AG04449 (cell line): ENCODE measurements at regions of chr3 and their contacts with region 1.

Region 1: GRCh38 chr3:195117978-195118581 is 152.9 kb downstream of the XXYLT1 start:
- DNase-seq: no peak
- H3K4me3 ChIP-seq: no peak overlapping the region
- CTCF ChIP-seq: no peak

Region 2: GRCh38 chr3:195048059-195048905 is 69.8 kb before region 1 on chr3:
- CTCF ChIA-PET with region 1: no interaction called
- POLR2A ChIA-PET with region 1: no interaction called
- DNase-seq: no peak
- H3K4me3 ChIP-seq: no peak overlapping the region
- CTCF ChIP-seq: no peak

Region 3: GRCh38 chr3:195133462-195133861 is 15.4 kb after region 1 on chr3:
- CTCF ChIA-PET with region 1: interaction called, 24 read pairs
- POLR2A ChIA-PET with region 1: no interaction called
- DNase-seq: no peak
- H3K4me3 ChIP-seq: no peak overlapping the region
- CTCF ChIP-seq: no peak

Region 4: GRCh38 chr3:195230244-195230643 is 112.2 kb after region 1 on chr3:
- CTCF ChIA-PET with region 1: no interaction called
- POLR2A ChIA-PET with region 1: no interaction called
- DNase-seq: no peak
- H3K4me3 ChIP-seq: no peak overlapping the region
- CTCF ChIP-seq: no peak

Region 5: DNA sequence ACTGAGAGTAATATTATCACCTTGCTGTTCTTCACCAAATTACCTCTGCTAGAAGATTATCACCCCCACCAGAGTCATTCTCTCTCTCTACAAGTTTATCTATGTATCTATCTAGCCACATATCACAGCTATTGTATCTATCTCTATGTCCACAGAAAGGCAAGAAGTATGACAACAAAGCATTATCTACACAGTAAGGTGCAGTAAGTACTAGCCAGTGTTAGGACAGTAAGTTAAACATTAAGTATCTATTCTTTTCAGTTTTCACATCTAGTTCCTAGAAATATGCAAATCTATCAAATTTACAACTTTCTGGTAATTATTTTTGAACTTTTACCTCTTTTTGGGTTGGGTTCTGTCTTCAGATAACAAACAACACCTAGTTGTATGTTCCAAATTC is 179.4 kb after region 1 on chr3:
- CTCF ChIA-PET with region 1: no interaction called
- POLR2A ChIA-PET with region 1: no interaction called
- DNase-seq: no peak
- H3K4me3 ChIP-seq: no peak overlapping the region
- CTCF ChIP-seq: no peak